ENCODE measurements at regions of chr18 and their contacts with region 1.

Region 1: DNA sequence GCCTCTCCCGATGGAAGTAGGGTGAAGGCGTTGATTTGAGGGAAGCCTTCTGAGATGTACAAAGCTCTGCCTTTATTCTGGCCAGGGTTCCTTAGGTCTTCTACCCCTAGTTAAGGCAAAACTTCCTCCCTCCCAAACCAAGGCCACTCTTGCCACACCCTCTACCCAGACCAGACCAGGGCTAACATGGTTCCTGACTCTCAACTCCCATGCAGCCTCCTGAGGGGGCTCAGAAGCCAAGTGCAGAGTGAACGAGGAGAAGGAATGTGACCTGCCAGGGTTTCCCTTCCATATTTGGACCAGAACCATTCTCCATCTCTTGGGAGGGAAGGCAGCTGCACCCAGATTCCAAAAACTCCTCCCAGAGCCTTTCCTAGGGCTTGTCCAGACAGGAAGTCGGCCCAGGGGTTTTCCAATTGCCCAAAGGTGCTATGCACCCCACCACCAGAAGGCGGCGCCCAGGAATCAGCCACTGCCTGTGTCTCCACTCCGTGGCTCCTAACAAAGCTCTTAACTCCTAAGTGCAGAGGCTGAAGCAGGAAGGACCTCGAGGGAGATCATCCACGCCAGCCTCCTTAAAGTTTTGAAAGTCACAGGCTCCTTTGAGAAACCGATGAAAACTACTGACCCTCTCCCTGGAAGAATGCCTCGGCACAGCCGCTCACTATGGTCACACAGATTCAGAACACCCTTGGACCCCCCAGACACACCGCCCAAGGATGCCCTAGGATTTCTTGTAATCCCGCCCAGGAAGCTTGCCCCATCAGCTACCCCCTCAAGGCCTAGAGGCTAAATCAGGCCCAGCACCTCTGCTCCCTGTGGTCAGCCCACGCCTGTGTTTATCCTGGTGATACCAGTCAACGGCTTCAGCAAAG is 157.8 kb downstream of the SMAD2 start:
- DNase-seq: peak; percentile 66
- H3K4me3 ChIP-seq: no peak overlapping the region
- H3K27ac ChIP-seq: no peak overlapping the region
- H3K4me1 ChIP-seq: no peaks in the 10 kb centered on the region
- H3K27me3 ChIP-seq: no peaks in the 10 kb centered on the region
- CTCF ChIP-seq: peak; percentile 87

Region 2: DNA sequence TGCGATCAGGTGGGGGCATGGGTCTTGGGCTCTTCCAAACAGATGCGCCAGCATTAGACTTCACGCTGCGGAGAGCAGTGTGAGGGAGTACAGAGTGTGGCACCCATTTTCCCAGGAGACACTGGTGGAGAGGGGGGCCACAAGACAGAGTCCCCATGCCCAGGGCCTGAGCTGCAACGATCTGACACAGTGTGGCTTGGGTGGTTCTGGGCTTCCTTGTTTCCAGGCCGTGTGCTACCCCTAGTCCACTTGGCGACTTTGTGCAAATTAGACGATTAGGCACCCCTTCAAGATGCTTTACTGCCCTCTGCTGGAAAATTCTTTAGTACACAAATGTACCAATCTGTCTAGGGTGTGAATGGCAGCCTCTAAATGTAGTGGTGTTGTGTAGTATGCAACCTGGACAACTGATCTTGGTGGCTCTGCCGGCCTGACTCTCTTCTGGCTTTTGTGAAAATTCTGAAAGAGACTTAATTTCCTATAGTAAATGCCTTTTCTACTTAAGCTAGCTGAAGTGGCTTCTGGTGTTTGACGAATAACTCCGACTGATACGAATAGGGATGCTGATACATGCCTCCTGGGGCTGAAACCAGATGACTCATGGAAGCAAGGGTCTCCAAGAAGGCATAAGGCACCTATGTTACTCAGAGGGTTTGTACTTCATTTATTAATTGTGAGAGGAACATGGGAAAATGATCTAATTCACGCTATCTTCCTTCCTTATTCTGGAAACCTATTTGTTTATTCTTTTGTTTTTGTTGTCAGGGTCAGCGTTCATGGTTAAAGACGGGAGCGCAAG is 250.1 kb after region 1 on chr18:
- CTCF ChIA-PET with region 1: no interaction called
- POLR2A ChIA-PET with region 1: no interaction called
- intact Hi-C with region 1: loop called (anchors 1 kb)
- DNase-seq: peak; percentile 80
- H3K4me3 ChIP-seq: no peak overlapping the region
- H3K27ac ChIP-seq: no peak overlapping the region
- H3K4me1 ChIP-seq: no peaks in the 10 kb centered on the region
- H3K27me3 ChIP-seq: peaks cover 28% of the 10 kb centered on the region
- CTCF ChIP-seq: peak; percentile 64

Region 3: GRCh38 chr18:48488388-48488850 is 715.8 kb after region 1 on chr18:
- CTCF ChIA-PET with region 1: no interaction called
- POLR2A ChIA-PET with region 1: no interaction called
- intact Hi-C with region 1: no loop called
- DNase-seq: peak; percentile 72
- H3K4me3 ChIP-seq: no peak overlapping the region
- H3K27ac ChIP-seq: no peak overlapping the region
- H3K4me1 ChIP-seq: no peaks in the 10 kb centered on the region
- H3K27me3 ChIP-seq: no peaks in the 10 kb centered on the region
- CTCF ChIP-seq: no peak